ENCODE measurements at regions of chr12 and their contacts with region 1.

Region 1: GRCh38 chr12:50314629-50315312 is 31.5 kb upstream of the LIMA1 start:
- DNase-seq: peak; percentile 70
- H3K4me3 ChIP-seq: no peak overlapping the region
- H3K27ac ChIP-seq: no peak overlapping the region
- H3K4me1 ChIP-seq: no peaks in the 10 kb centered on the region
- H3K27me3 ChIP-seq: no peaks in the 10 kb centered on the region
- CTCF ChIP-seq: peak; percentile 50 to 68
- POLR2A ChIP-seq: no peak

Region 2: GRCh38 chr12:50103767-50104321 is 210.9 kb before region 1 on chr12 and contains the start of gene GPD1:
- CTCF ChIA-PET with region 1: interaction called, 10 read pairs
- POLR2A ChIA-PET with region 1: no interaction called
- dilution Hi-C with region 1: no loop called
- intact Hi-C with region 1: no loop called
- DNase-seq: no peak
- H3K4me3 ChIP-seq: no peak within 1 kb of the TSS
- H3K27ac ChIP-seq: no peak within 1 kb of the TSS
- H3K4me1 ChIP-seq: no peaks in the 10 kb centered on the region
- H3K27me3 ChIP-seq: no peaks in the 10 kb centered on the region
- CTCF ChIP-seq: no peak
- POLR2A ChIP-seq: no peak
- total RNA-seq, gene GPD1: 0.48 TPM in 1 of 2 replicates, not detected in the other

Region 3: GRCh38 chr12:50145439-50145838 is 169.3 kb before region 1 on chr12:
- CTCF ChIA-PET with region 1: interaction called, 10 read pairs
- POLR2A ChIA-PET with region 1: no interaction called
- dilution Hi-C with region 1: no loop called
- intact Hi-C with region 1: no loop called
- DNase-seq: no peak
- H3K4me3 ChIP-seq: no peak overlapping the region
- H3K27ac ChIP-seq: no peak overlapping the region
- H3K4me1 ChIP-seq: no peaks in the 10 kb centered on the region
- H3K27me3 ChIP-seq: no peaks in the 10 kb centered on the region
- CTCF ChIP-seq: no peak
- POLR2A ChIP-seq: no peak

Region 4: DNA sequence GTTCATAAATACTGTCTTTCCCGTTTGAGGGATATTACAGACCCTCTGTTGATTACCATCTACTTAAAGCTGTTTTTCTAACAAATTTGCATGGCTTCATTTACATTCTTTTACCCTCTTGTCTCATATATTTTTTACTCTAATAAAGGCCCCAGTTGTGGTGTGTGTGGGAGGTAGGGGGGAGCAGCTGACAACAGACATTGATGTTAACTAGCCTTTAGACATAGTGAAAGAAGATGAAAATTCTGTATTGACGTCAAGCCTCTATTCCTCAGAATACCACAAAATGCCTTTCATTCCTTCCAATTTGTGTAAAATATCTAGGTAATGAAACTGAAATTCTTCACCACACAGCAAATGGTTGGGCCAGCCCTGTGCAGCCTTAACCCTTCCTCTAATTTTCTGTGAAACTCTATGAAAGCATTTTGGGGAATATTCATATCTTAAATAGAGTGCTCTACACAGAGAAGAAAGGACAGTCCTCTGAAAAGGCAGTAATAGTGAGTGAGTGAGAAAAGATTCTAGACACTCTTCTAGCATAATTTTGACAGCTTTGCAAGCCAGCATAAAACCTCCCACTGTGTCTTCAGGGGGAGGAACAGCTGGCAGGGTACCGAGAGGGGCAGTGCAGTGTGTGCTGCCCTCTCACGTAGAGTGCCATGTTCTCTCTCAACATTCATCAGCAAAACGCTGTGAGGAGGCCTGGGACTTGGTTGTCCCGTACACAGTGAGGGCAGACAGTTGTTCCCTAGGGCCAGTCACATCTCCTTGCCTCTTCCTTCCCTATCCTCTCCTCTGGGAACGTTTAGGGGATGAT is 127.5 kb before region 1 on chr12:
- CTCF ChIA-PET with region 1: interaction called, 181 read pairs
- POLR2A ChIA-PET with region 1: no interaction called
- dilution Hi-C with region 1: no loop called
- intact Hi-C with region 1: loop called (anchors 1 kb)
- DNase-seq: no peak
- H3K4me3 ChIP-seq: no peak overlapping the region
- H3K27ac ChIP-seq: peak overlapping the region; percentile 90
- H3K4me1 ChIP-seq: peaks cover 40% of the 10 kb centered on the region
- H3K27me3 ChIP-seq: no peaks in the 10 kb centered on the region
- CTCF ChIP-seq: no peak
- POLR2A ChIP-seq: no peak

Region 5: DNA sequence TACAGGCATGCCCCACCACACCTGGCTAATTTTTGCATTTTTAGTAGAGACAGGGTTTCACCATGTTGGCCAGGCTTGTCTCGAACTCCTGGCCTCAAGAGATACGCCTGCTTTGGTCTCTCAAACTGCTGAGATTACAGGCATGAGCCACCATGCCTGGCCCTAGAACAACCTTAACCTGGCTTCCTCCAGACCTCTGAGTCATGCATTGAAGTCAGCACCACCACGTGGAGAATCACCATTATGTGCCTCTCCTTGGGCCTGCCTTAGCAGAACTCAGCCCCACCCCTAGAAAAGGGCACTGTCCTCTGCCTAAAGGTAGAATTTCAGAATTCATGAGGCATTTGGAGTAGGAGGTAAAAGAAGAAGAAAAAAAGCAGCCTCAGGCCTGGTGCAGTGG is 80.4 kb before region 1 on chr12:
- CTCF ChIA-PET with region 1: interaction called, 21 read pairs
- POLR2A ChIA-PET with region 1: no interaction called
- dilution Hi-C with region 1: no loop called
- intact Hi-C with region 1: no loop called
- DNase-seq: no peak
- H3K4me3 ChIP-seq: no peak overlapping the region
- H3K27ac ChIP-seq: no peak overlapping the region
- H3K4me1 ChIP-seq: peaks cover 8% of the 10 kb centered on the region
- H3K27me3 ChIP-seq: no peaks in the 10 kb centered on the region
- CTCF ChIP-seq: no peak
- POLR2A ChIP-seq: no peak